A673 (cell line): ENCODE measurements at regions of chr14 and their contacts with region 1.

Region 1: GRCh38 chr14:36373982-36374673 is 53.7 kb upstream of the MBIP start:
- DNase-seq: peak; percentile 90
- H3K4me3 ChIP-seq: no peak overlapping the region
- H3K27ac ChIP-seq: no peak overlapping the region
- H3K4me1 ChIP-seq: no peaks in the 10 kb centered on the region
- H3K27me3 ChIP-seq: no peaks in the 10 kb centered on the region
- CTCF ChIP-seq: peak; percentile 90

Region 2: DNA sequence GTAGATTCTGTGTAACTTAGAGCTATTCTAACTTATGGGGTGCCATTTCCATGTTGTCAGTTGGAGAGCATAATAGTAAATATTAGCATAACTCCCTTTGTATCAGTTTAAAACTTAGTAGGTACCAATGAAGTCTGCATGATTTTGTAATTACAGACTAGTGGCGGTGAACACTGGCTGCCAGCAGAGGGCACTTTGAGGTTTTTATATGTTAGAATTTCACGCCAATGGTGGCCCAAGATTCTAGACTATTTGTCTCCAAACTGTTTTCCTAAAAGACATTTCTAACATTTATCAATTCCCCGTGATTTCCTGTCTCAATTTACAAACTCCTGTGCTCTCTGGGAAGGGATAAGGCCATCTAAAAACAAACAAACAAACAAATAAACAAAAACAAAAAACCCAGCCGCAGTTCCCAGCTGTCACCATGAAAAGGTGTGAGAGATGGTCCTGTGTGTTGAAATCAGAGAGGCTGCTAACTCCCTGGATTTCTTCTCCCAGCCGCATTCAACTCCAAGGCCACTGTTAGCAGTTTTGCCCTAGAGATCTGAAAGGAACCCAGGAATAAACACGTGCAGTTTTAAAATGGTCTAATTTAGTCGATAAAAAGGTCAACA is 490.3 kb before region 1 on chr14:
- CTCF ChIA-PET with region 1: interaction called, 5 read pairs
- POLR2A ChIA-PET with region 1: no interaction called
- intact Hi-C with region 1: loop called (anchors 10 kb)
- DNase-seq: peak; percentile 59
- H3K4me3 ChIP-seq: no peak overlapping the region
- H3K27ac ChIP-seq: no peak overlapping the region
- H3K4me1 ChIP-seq: peaks cover 13% of the 10 kb centered on the region
- H3K27me3 ChIP-seq: no peaks in the 10 kb centered on the region
- CTCF ChIP-seq: peak; percentile 89

Region 3: GRCh38 chr14:36070031-36070719 is 304.0 kb before region 1 on chr14:
- CTCF ChIA-PET with region 1: interaction called, 11 read pairs
- POLR2A ChIA-PET with region 1: no interaction called
- intact Hi-C with region 1: loop called (anchors 1 kb)
- DNase-seq: peak; percentile 71
- H3K4me3 ChIP-seq: no peak overlapping the region
- H3K27ac ChIP-seq: no peak overlapping the region
- H3K4me1 ChIP-seq: peaks cover 7% of the 10 kb centered on the region
- H3K27me3 ChIP-seq: peaks cover 5% of the 10 kb centered on the region
- CTCF ChIP-seq: peak; percentile 88

Region 4: GRCh38 chr14:36207500-36207899 is 166.6 kb before region 1 on chr14:
- CTCF ChIA-PET with region 1: no interaction called
- POLR2A ChIA-PET with region 1: no interaction called
- intact Hi-C with region 1: loop called (anchors 1 kb)
- DNase-seq: peak; percentile 6
- H3K4me3 ChIP-seq: no peak overlapping the region
- H3K27ac ChIP-seq: no peak overlapping the region
- H3K4me1 ChIP-seq: no peaks in the 10 kb centered on the region
- H3K27me3 ChIP-seq: peaks cover 12% of the 10 kb centered on the region
- CTCF ChIP-seq: peak; percentile 47

Region 5: DNA sequence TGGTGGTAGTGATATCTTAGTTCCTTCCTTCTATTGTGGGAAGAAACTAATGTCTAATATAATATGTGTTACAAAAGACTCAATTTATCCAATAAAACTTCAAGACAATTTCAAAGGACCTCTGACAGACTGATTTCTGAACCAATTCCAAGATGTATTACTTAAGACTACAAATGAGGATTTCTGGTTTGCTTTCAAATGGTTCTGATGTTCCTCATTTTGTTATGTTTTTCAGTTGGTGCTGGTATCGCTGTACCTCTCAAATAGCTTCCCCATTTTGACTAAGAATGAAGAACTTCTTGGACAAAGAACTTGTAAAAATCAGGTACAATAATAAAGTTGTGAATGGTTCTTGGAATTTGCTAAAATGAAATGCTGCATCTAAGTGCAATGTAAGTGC is 34.3 kb before region 1 on chr14:
- CTCF ChIA-PET with region 1: no interaction called
- POLR2A ChIA-PET with region 1: no interaction called
- intact Hi-C with region 1: no loop called
- DNase-seq: no peak
- H3K4me3 ChIP-seq: no peak overlapping the region
- H3K27ac ChIP-seq: no peak overlapping the region
- H3K4me1 ChIP-seq: no peaks in the 10 kb centered on the region
- H3K27me3 ChIP-seq: peaks cover 61% of the 10 kb centered on the region
- CTCF ChIP-seq: no peak

Region 6: DNA sequence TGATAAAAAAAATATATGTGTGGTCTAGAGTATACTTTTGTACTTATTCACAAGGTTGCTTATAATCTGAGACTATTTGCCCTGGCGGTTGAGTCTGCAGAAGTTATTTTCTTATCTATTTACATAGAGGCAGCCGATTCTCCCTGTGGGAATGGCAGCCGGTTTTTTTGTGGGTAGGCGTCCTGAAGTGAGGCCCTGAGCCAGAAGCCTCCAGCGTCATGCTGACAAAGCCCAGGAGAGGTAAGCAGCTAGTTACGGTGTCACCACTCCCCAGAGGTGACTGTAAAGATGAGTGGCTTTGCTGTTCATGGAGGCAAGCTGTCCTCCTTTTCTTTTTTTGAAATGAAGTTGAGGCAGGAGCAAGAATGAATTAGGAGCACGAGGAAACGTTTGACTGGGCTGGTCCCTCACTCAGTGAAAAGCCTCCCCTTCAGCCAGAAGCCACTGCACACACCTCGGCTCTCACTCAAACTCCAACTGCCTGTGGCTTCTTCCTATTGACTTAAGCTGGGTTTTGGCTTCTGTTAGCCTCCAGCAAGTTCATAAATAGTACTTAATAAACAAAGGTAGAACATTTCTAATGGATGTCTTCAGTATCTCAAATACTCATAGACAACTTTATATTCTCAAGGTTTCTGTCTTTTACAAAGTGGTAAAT is 309.1 kb after region 1 on chr14:
- CTCF ChIA-PET with region 1: no interaction called
- POLR2A ChIA-PET with region 1: no interaction called
- intact Hi-C with region 1: no loop called
- DNase-seq: no peak
- H3K4me3 ChIP-seq: no peak overlapping the region
- H3K27ac ChIP-seq: no peak overlapping the region
- H3K4me1 ChIP-seq: peaks cover 22% of the 10 kb centered on the region
- H3K27me3 ChIP-seq: no peaks in the 10 kb centered on the region
- CTCF ChIP-seq: no peak